ENCODE measurements at regions of chr2 and their contacts with region 1.

Region 1: DNA sequence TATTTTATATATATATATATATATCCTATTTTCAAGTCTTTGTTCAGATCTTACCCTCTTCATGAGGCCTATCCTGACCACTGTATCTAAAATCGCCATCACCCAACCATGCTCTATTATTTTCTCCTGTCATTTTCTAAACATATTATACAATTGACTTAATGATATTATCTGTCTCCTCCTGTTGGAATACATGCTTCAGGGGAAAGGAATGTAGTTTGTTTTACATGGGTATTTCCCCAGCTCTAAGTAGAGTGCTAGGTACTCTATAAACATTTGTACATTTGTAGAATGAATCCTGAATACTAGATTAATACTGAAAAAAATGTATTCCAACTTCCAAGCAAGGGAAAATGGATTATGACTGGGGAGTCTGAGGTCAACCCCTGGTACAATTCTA is 26.2 kb downstream of the TTC21B start:
- DNase-seq: no peak
- ATAC-seq: no peak
- H3K4me3 ChIP-seq: no peak overlapping the region
- H3K27ac ChIP-seq: no peak overlapping the region
- H3K4me1 ChIP-seq: no peaks in the 10 kb centered on the region
- H3K27me3 ChIP-seq: no peaks in the 10 kb centered on the region
- CTCF ChIP-seq: no peak
- EP300 ChIP-seq: no peak
- POLR2A ChIP-seq: no peak
- RAD21 ChIP-seq: no peak

Region 2: DNA sequence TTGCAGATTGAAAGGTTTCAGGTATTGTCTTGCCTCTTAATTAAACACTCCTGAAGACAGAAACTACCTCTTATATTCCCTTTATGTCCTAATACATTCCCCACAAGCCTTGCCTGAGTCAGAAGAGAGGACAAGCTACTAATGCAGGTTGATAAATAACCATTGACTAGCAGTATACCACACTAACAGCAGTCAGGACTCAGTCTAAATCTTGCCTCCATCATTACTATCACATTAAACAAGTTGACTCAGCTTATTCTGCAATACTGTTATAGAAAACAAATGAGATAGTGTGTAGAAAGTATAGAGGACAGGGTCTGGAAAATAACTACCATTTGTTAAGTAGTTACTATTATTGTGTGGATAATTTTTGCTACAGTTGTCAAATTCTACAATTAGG is 37.6 kb before region 1 on chr2:
- CTCF ChIA-PET with region 1: no interaction called
- POLR2A ChIA-PET with region 1: no interaction called
- in situ Hi-C with region 1: no loop called
- intact Hi-C with region 1: loop called (anchors 5 kb)
- DNase-seq: no peak
- ATAC-seq: no peak
- H3K4me3 ChIP-seq: no peak overlapping the region
- H3K27ac ChIP-seq: no peak overlapping the region
- H3K4me1 ChIP-seq: no peaks in the 10 kb centered on the region
- H3K27me3 ChIP-seq: no peaks in the 10 kb centered on the region
- CTCF ChIP-seq: no peak
- EP300 ChIP-seq: no peak
- POLR2A ChIP-seq: no peak
- RAD21 ChIP-seq: no peak